Thyroid gland (tissue), 4 donors: ENCODE measurements at regions of chr7 and their contacts with region 1.

Region 1: DNA sequence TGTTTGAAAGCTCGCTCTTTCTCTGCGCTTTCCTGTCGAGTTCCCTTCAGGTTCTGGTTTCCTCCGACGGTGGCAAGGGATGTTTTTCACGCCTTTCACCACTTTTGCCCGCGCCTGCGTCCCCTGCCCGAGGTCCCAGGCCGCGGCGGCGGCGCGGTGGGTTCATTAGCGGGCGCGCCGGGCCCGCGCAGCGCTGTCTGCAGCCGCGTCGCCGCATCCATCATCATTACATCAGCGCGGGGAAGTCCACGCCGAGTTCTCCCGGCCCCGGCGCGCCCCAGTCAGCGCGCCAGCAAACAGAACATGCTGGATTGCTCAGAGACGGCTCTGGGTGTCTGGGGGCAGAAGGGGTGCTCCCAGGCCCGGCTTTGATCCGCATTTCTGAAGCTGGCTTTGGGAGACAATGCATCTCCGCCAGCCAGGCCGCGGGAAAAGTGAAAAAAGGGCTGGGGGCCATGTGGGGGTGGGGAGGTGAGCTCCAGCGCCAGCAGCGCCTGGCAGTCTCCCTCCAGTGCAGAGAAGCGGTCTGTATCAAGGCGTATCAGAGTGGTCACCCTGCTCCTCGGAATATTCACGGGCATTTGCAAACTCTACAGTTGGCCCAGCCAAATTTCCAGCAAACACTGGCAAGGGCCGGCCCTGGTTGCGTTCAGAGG is 8.9 kb downstream of the GLI3 start:
- DNase-seq: no peak
- H3K4me3 ChIP-seq: no peak overlapping the region
- H3K27ac ChIP-seq: no peak overlapping the region
- H3K4me1 ChIP-seq: peaks cover 14 to 20% of the 10 kb centered on the region in 2 donors
- H3K27me3 ChIP-seq: no peaks in the 10 kb centered on the region
- CTCF ChIP-seq: no peak
- POLR2A ChIP-seq: no peak

Region 2: DNA sequence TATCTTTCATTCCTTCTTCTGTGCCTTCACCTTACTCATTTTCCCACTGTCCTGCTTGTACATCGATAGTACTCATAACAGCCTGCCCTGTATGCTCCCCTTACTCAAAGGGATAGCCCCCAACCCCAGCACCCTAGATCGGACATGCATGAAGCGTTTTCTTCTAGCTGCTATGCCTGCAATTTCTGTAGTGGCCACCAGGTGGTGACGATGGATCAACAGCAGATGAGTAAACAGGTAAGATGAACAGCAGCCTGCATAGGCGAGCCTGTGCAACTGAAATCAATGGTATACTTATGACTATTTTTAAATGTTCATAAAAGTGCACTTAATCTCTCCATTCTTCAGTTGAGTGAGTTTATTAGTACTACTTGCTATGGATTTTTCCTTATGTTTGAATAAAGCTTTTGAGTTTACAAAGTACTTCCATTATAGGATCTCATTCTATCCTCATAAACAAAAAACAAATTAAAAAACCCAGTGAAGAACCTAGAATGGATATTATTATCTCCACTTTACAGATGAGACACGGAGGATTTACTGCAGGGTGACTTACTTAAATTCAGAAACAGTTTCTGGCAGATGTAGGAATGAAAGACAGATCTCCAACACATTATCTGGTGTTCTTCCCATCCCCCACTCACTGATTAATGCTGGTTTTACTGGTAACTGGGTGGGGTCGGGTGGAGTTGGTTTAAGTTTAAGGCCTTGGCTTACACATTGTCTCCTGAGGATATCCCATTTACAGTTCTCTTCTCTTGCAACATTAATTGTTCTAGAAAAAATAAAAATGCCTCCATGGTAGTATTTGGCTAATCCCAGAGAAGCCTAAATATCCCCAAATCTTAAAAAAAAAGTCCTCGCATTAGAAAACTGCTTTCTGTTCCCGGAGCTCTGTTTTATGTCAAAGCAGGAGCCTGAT is 213.2 kb before region 1 on chr7:
- intact Hi-C with region 1: no loop called
- DNase-seq: no peak
- H3K4me3 ChIP-seq: no peak overlapping the region
- H3K27ac ChIP-seq: no peak overlapping the region
- H3K4me1 ChIP-seq: peaks cover 29 to 41% of the 10 kb centered on the region in 2 donors
- H3K27me3 ChIP-seq: no peaks in the 10 kb centered on the region
- CTCF ChIP-seq: peak in 4 of 6 experiments; percentile 41 to 62 (median 51)
- POLR2A ChIP-seq: no peak

Region 3: GRCh38 chr7:42053834-42054233 is 174.2 kb before region 1 on chr7:
- intact Hi-C with region 1: no loop called
- DNase-seq: no peak
- H3K4me3 ChIP-seq: no peak overlapping the region
- H3K27ac ChIP-seq: no peak overlapping the region
- H3K4me1 ChIP-seq: no peaks in the 10 kb centered on the region
- H3K27me3 ChIP-seq: no peaks in the 10 kb centered on the region
- CTCF ChIP-seq: no peak
- POLR2A ChIP-seq: no peak

Region 4: DNA sequence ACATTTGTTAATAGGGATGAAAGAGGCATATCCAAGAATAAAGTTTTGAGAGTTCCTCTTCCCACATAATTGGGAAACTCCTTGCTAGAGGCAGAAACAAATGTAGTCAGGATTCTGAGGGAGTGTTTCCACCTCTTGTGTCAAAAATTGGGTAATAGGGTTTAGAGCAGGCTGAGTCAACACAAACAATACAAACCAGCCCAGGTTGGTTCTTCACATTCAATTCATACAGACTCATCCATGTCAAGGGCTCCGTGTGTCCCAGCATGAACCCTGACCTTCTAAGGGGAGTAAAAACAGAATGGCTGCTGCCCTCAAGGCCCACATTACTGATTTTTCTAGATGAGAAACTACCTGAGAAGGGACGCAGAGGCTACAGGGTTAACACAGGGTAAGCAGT is 66.3 kb before region 1 on chr7:
- intact Hi-C with region 1: loop called (anchors 5 kb)
- DNase-seq: no peak
- H3K4me3 ChIP-seq: no peak overlapping the region
- H3K27ac ChIP-seq: peak overlapping the region in 2 of 3 donors; percentile 18 to 56
- H3K4me1 ChIP-seq: peaks cover 45 to 49% of the 10 kb centered on the region in 2 donors
- H3K27me3 ChIP-seq: no peaks in the 10 kb centered on the region
- CTCF ChIP-seq: no peak
- POLR2A ChIP-seq: no peak

Region 5: GRCh38 chr7:42262964-42263363 is 34.9 kb after region 1 on chr7:
- intact Hi-C with region 1: no loop called
- DNase-seq: peak in 1 of 2 donors; percentile 16
- H3K4me3 ChIP-seq: no peak overlapping the region
- H3K27ac ChIP-seq: no peak overlapping the region
- H3K4me1 ChIP-seq: no peaks in the 10 kb centered on the region
- H3K27me3 ChIP-seq: no peaks in the 10 kb centered on the region
- CTCF ChIP-seq: no peak
- POLR2A ChIP-seq: no peak

Region 6: DNA sequence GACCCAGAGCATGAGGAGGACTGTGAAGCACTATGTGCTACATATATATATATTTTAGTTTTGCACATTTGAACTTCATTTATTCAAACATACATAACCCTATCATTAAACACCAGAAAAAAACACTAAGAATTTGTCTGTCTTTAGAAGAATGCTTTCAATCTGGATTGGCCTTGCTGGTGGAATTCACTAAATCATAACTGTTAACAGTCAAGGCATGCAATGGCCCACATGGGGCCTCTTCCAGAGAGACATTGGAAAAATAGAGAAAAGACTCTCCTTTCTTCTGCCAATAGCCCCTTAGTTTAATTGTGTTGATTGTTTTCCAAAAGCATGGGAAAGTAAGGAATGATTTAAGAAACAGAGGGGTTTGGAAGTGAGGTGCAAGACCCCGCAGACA is 782.0 kb after region 1 on chr7:
- intact Hi-C with region 1: no loop called
- DNase-seq: no peak
- H3K4me3 ChIP-seq: no peak overlapping the region
- H3K27ac ChIP-seq: no peak overlapping the region
- H3K4me1 ChIP-seq: no peaks in the 10 kb centered on the region
- H3K27me3 ChIP-seq: no peaks in the 10 kb centered on the region
- CTCF ChIP-seq: no peak
- POLR2A ChIP-seq: no peak